Lower lobe of right lung (tissue), 2 donors: ENCODE measurements at regions of chr1 and their contacts with region 1.

Region 1: GRCh38 chr1:67749844-67750689 is 65.1 kb downstream of the GADD45A start:
- DNase-seq: no peak
- ATAC-seq: peak; percentile 62 to 88
- H3K4me3 ChIP-seq: no peak overlapping the region
- H3K27ac ChIP-seq: peak overlapping the region; percentile 58
- H3K4me1 ChIP-seq: peaks cover 43% of the 10 kb centered on the region
- H3K27me3 ChIP-seq: no peaks in the 10 kb centered on the region
- CTCF ChIP-seq: no peak

Region 2: GRCh38 chr1:67535474-67535873 is 214.6 kb before region 1 on chr1:
- intact Hi-C with region 1: loop called (anchors 10 kb)
- DNase-seq: peak; percentile 85
- ATAC-seq: peak; percentile 87 to 92
- H3K4me3 ChIP-seq: no peak overlapping the region
- H3K27ac ChIP-seq: no peak overlapping the region
- H3K4me1 ChIP-seq: no peaks in the 10 kb centered on the region
- H3K27me3 ChIP-seq: no peaks in the 10 kb centered on the region
- CTCF ChIP-seq: peak; percentile 85

Region 3: DNA sequence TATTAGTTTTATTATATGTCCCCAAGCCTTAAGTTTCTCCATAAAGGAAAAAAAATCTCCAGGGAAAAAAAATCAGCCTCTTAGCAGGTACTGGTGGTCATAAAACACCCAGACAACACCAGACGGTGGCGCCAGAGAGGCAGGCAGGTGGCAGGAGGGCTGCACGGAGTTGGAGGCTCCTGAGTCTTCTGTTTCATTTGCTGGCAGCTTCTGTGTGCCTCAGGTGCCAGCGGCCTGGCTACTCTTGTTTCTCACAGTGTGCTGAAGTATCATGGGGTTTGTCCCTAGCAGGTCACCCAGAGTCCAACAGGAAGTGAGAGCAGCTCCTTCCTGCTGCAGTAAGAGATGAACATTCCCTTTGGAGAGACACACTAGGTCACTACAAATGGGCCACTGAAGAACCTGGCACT is 188.4 kb before region 1 on chr1:
- intact Hi-C with region 1: loop called (anchors 10 kb)
- DNase-seq: peak; percentile 93
- ATAC-seq: peak; percentile 87 to 91
- H3K4me3 ChIP-seq: no peak overlapping the region
- H3K27ac ChIP-seq: no peak overlapping the region
- H3K4me1 ChIP-seq: peaks cover 34% of the 10 kb centered on the region
- H3K27me3 ChIP-seq: no peaks in the 10 kb centered on the region
- CTCF ChIP-seq: peak; percentile 87